IMR-90 (cell line): ENCODE measurements at regions of chr13 and their contacts with region 1.

Region 1: GRCh38 chr13:108795841-108796240 is 166.4 kb downstream of the MYO16 start:
- DNase-seq: peak; percentile 12
- ATAC-seq: no peak
- H3K4me3 ChIP-seq: no peak overlapping the region
- H3K27ac ChIP-seq: no peak overlapping the region
- H3K4me1 ChIP-seq: no peaks in the 10 kb centered on the region
- H3K27me3 ChIP-seq: no peaks in the 10 kb centered on the region
- CTCF ChIP-seq: no peak
- POLR2A ChIP-seq: no peak
- RAD21 ChIP-seq: no peak

Region 2: DNA sequence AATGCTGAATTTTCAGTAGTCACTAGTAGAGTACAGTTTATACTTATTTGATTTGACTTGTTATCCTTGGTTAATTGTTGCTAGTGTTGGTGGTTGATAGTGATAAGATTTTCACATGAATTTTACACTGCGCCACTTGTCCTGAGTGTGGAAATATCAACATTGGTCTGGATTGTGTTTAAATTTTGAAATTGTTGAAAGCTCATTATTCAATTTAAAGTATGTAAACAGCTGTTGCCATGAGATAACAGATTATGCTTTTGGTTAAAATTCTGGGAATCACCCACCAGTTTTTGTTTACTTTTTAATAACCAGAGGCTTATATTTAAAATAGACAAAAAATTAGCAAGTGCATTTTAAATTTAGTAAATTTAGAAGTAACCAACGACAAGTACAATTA is 538.6 kb before region 1 on chr13:
- CTCF ChIA-PET with region 1: no interaction called
- POLR2A ChIA-PET with region 1: no interaction called
- dilution Hi-C with region 1: no loop called
- in situ Hi-C with region 1: no loop called
- intact Hi-C with region 1: loop called (anchors 2 kb)
- DNase-seq: no peak
- ATAC-seq: no peak
- H3K4me3 ChIP-seq: no peak overlapping the region
- H3K27ac ChIP-seq: no peak overlapping the region
- H3K4me1 ChIP-seq: no peaks in the 10 kb centered on the region
- H3K27me3 ChIP-seq: no peaks in the 10 kb centered on the region
- CTCF ChIP-seq: no peak
- POLR2A ChIP-seq: no peak
- RAD21 ChIP-seq: no peak